ENCODE measurements at regions of chr17 and their contacts with region 1.

Region 1: DNA sequence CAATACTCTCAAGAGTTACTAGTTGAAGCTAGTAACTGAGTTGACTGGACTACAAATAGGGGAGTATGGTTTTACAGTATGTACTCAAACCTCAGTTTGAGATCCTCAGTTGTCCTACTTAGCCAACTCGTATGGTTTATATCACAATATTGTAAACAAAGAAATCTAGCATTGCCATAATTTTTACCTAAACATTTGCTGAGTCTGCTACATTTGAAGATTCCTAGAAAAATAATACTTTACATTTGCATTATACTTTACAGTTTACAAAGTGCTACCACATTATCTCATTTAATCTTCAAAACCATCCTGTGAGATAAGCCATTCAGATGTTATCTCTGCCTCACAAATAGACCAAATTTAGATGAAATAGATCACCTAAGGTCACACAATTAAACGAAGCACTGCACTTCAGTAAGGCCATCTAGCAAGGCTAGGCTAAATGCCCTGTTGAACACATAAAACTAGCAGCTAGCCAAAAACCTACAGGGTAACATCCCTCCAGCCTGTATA is 16.3 kb downstream of the CBX1 start:
- DNase-seq: no peak
- H3K4me3 ChIP-seq: no peak overlapping the region
- H3K27ac ChIP-seq: no peak overlapping the region
- H3K4me1 ChIP-seq: peaks cover 4 to 9% of the 10 kb centered on the region in 2 experiments; a peak in 2 of 4 replicates
- H3K27me3 ChIP-seq: no peaks in the 10 kb centered on the region
- CTCF ChIP-seq: no peak
- EP300 ChIP-seq: no peak
- RAD21 ChIP-seq: no peak

Region 2: DNA sequence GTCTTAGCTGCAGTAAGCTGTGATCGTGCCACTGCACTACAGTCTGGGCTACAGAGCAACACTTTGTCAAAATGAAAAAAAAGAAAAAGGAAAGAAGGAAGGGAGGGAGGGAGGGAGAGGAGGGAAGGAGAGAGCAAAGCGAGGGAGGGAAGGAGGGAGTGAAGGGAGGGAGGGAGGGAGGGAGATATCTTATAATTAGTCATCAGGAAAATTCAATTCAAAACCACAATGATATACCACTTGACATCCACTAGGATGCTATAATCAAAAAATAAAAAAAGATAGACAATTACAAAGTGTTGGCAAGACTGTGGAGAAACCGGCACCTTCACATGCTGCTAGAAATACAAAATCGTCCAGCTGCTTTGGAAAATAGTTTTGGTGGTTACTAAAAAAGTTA is 989.7 kb before region 1 on chr17:
- CTCF ChIA-PET with region 1: no interaction called
- POLR2A ChIA-PET with region 1: no interaction called
- DNase-seq: no peak
- H3K4me3 ChIP-seq: no peak overlapping the region
- H3K27ac ChIP-seq: no peak overlapping the region
- H3K4me1 ChIP-seq: peaks cover 0 to 11% of the 10 kb centered on the region in 2 experiments; a peak in 2 of 4 replicates
- H3K27me3 ChIP-seq: no peaks in the 10 kb centered on the region
- CTCF ChIP-seq: no peak
- EP300 ChIP-seq: no peak
- RAD21 ChIP-seq: no peak

Region 3: GRCh38 chr17:48123111-48123510 is 38.1 kb after region 1 on chr17:
- CTCF ChIA-PET with region 1: interaction called, 19 read pairs
- POLR2A ChIA-PET with region 1: no interaction called
- DNase-seq: no peak
- H3K4me3 ChIP-seq: no peak overlapping the region
- H3K27ac ChIP-seq: no peak overlapping the region
- H3K4me1 ChIP-seq: peaks cover 7 to 16% of the 10 kb centered on the region in 2 experiments; a peak in 1 of 4 replicates
- H3K27me3 ChIP-seq: no peaks in the 10 kb centered on the region
- CTCF ChIP-seq: no peak
- EP300 ChIP-seq: no peak
- RAD21 ChIP-seq: no peak

Measured in SK-N-SH (cell line).